ENCODE measurements at regions of chr17 and their contacts with region 1.

Region 1: GRCh38 chr17:82154881-82155331 is 56.9 kb upstream of the FASN start:
- DNase-seq: no peak
- H3K4me3 ChIP-seq: no peak overlapping the region
- H3K4me1 ChIP-seq: no peaks in the 10 kb centered on the region
- H3K27me3 ChIP-seq: no peaks in the 10 kb centered on the region

Region 2: GRCh38 chr17:80663781-80664206 is 1491.1 kb before region 1 on chr17:
- in situ Hi-C with region 1: no loop called
- DNase-seq: no peak
- H3K4me3 ChIP-seq: no peak overlapping the region
- H3K4me1 ChIP-seq: peaks cover 3% of the 10 kb centered on the region
- H3K27me3 ChIP-seq: no peaks in the 10 kb centered on the region

Region 3: DNA sequence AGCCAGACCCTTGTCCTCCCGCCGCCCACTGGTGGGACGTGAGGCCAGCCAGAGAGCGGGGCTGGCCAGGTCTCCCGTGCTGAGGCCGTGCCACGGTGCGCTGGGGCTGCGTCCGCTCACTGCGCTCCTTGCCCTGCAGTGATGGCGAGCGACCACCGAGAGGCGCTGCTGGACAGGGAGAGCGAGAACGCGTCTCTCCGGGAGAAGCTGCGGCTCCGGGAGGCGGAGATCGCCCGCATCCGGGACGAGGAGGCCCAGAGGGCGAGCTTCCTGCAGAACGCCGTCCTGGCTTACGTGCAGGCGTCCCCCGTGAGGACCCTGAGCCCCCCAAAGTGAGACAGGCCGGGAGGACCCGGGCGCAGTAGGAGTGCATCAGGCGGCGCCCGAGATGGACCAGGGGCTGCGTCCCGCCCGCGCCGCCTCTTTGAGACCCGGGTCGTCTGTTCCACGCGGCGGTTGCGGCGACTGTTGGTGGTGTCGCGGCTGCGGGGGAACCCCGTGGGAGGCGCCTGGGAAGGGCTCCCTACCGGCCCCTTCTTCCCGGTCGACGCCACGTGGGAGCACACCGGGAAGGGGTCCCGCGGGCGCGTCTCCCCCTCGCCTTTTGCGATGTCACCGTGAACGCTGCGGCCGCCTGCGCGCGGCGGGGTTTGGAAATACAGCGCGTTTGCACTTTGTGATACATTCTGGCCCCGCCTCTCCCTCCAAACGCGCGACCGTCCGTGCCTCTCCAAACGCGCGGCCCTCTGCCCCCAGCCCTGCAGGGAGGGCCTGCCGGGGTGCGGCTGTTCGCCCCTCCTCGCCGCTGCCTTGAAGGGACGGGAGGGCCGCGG is 124.2 kb before region 1 on chr17:
- in situ Hi-C with region 1: loop called (anchors 5 kb)
- DNase-seq: peak; percentile 71 to 91
- H3K4me3 ChIP-seq: peak overlapping the region; percentile 52
- H3K4me1 ChIP-seq: peaks cover 6% of the 10 kb centered on the region; the same call in 1 of the 2 replicates
- H3K27me3 ChIP-seq: no peaks in the 10 kb centered on the region

Region 4: DNA sequence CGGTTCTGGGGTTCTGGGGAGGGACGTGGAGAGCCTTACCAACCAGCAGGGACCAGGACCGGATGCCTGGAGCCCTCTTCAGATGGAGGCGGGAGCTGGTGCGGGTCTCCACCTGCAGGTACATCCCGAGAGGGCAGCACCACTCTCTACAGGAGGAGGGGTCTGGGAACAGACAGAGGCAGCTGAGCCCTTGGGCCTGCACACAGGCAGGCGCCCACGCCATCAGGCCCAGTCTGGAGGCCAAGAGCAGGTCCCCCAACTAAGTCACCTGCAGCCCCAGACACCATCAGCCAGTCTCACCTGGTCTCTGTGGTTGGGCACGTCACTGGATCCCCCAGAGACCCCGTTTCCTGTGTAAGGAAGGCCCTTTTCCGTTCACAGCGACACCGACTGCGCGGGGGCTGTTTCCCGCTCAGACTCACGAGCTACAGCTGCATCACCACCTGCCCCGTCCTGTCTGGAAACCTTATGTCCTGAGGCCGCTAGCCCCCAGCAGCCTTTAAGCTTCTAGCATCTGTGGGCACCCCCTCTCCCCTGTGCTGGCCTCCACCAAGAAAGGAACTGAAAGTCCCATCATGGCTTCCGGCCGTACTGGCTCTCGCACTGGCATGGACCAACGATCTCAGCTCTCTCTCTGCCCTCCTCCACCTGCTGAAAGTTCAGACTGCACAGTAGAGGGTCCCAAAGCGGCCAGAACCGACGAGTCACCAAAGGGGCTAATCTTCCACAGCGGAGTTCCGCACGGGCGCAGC is 294.4 kb after region 1 on chr17:
- in situ Hi-C with region 1: no loop called
- DNase-seq: no peak
- H3K4me3 ChIP-seq: peak overlapping the region; percentile 78
- H3K4me1 ChIP-seq: peaks cover 13% of the 10 kb centered on the region
- H3K27me3 ChIP-seq: no peaks in the 10 kb centered on the region

Measured in HAP-1 (cell line).